IMR-90 (cell line): ENCODE measurements at regions of chr18 and their contacts with region 1.

Region 1: GRCh38 chr18:62131301-62131909 is 55.5 kb downstream of the PIGN start:
- DNase-seq: peak; percentile 76
- ATAC-seq: peak; percentile 92
- H3K4me3 ChIP-seq: no peak overlapping the region
- H3K27ac ChIP-seq: no peak overlapping the region
- H3K4me1 ChIP-seq: peaks cover 2% of the 10 kb centered on the region
- H3K27me3 ChIP-seq: no peaks in the 10 kb centered on the region
- CTCF ChIP-seq: peak; percentile 98
- POLR2A ChIP-seq: peak; percentile 64; the same call in 1 of the 2 replicates
- RAD21 ChIP-seq: peak; percentile 99

Region 2: GRCh38 chr18:61085761-61086160 is 1045.6 kb before region 1 on chr18:
- CTCF ChIA-PET with region 1: no interaction called
- POLR2A ChIA-PET with region 1: no interaction called
- dilution Hi-C with region 1: no loop called
- in situ Hi-C with region 1: no loop called
- intact Hi-C with region 1: loop called (anchors 5 kb)
- DNase-seq: no peak
- ATAC-seq: no peak
- H3K4me3 ChIP-seq: no peak overlapping the region
- H3K27ac ChIP-seq: no peak overlapping the region
- H3K4me1 ChIP-seq: no peaks in the 10 kb centered on the region
- H3K27me3 ChIP-seq: no peaks in the 10 kb centered on the region
- CTCF ChIP-seq: no peak
- POLR2A ChIP-seq: no peak
- RAD21 ChIP-seq: no peak

Region 3: DNA sequence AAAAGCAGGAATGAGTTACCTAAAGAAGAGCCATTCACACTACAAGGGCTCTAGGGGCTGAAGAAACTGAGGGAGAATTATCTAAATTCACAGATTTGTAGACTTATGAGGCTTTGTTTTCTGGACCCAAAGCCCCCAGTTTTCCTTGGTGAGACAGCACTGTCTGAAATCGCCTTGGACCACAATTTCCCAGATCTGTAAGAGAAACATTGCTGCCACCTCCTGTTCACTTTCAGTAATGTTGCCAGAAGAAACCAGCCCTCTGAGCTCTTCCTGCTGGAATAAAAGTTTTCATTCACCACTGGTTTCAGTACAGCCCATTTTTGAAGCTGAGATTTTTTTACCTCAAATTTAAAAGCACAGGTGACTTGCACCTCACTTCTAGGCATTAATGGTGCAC is 628.9 kb before region 1 on chr18:
- CTCF ChIA-PET with region 1: no interaction called
- POLR2A ChIA-PET with region 1: no interaction called
- dilution Hi-C with region 1: no loop called
- in situ Hi-C with region 1: no loop called
- intact Hi-C with region 1: loop called (anchors 1 kb)
- DNase-seq: peak; percentile 61
- ATAC-seq: peak; percentile 88
- H3K4me3 ChIP-seq: no peak overlapping the region
- H3K27ac ChIP-seq: no peak overlapping the region
- H3K4me1 ChIP-seq: no peaks in the 10 kb centered on the region
- H3K27me3 ChIP-seq: peaks cover 7% of the 10 kb centered on the region
- CTCF ChIP-seq: peak; percentile 74
- POLR2A ChIP-seq: no peak
- RAD21 ChIP-seq: peak; percentile 75

Region 4: GRCh38 chr18:61575419-61575818 is 556.0 kb before region 1 on chr18:
- CTCF ChIA-PET with region 1: no interaction called
- POLR2A ChIA-PET with region 1: no interaction called
- dilution Hi-C with region 1: no loop called
- in situ Hi-C with region 1: loop called (anchors 10 kb)
- intact Hi-C with region 1: no loop called
- DNase-seq: no peak
- ATAC-seq: peak; percentile 35; the same call in 1 of the 2 replicates
- H3K4me3 ChIP-seq: no peak overlapping the region
- H3K27ac ChIP-seq: no peak overlapping the region
- H3K4me1 ChIP-seq: peaks cover 6% of the 10 kb centered on the region
- H3K27me3 ChIP-seq: no peaks in the 10 kb centered on the region
- CTCF ChIP-seq: no peak
- POLR2A ChIP-seq: no peak
- RAD21 ChIP-seq: no peak

Region 5: GRCh38 chr18:61635901-61636528 is 495.4 kb before region 1 on chr18:
- CTCF ChIA-PET with region 1: interaction called, 6 read pairs
- POLR2A ChIA-PET with region 1: no interaction called
- dilution Hi-C with region 1: no loop called
- in situ Hi-C with region 1: loop called (anchors 10 kb)
- intact Hi-C with region 1: loop called (anchors 1 kb)
- DNase-seq: peak; percentile 63
- ATAC-seq: peak; percentile 82
- H3K4me3 ChIP-seq: no peak overlapping the region
- H3K27ac ChIP-seq: no peak overlapping the region
- H3K4me1 ChIP-seq: peaks cover 14% of the 10 kb centered on the region; the same call in 1 of the 2 replicates
- H3K27me3 ChIP-seq: no peaks in the 10 kb centered on the region
- CTCF ChIP-seq: peak; percentile 85
- POLR2A ChIP-seq: 0 out of 2 replicates have a peak, but pooled peaks have one; percentile 41
- RAD21 ChIP-seq: peak; percentile 87

Region 6: DNA sequence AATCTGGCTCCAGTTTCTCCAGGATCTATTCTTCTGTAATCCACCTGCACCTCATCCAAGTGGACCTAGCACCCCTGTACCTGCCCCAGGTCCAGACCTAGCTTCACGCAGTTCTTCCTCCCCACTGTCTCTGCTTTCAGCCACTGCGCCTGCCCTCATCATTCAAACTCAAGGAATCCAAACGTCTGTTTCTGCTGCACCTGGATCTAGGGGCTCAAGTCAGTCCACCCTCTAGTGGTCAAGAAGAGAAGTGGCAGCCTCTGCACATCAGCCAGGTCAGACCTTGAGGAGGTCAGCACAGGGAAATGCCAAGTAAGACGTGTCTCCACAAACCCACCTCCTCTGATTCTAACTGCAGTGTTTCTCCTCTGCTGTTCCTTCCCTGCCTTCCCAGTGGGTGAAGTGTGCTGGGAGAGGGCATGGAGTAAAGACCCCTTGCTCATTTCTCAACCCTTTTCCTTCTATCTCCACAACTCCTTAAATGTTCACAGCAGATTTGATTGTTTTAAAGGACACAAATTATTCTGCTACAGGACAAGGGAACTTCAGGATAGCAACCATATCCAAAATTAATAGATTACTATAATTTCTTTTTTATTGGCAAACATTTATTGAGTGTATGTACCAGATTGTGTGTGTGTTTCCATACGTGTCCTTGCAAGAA is 229.9 kb before region 1 on chr18:
- CTCF ChIA-PET with region 1: interaction called, 3 read pairs
- POLR2A ChIA-PET with region 1: no interaction called
- dilution Hi-C with region 1: no loop called
- in situ Hi-C with region 1: loop called (anchors 5 kb)
- intact Hi-C with region 1: loop called (anchors 2 kb)
- DNase-seq: peak; percentile 53
- ATAC-seq: peak; percentile 94
- H3K4me3 ChIP-seq: no peak overlapping the region
- H3K27ac ChIP-seq: no peak overlapping the region
- H3K4me1 ChIP-seq: peaks cover 2% of the 10 kb centered on the region; the same call in 1 of the 2 replicates
- H3K27me3 ChIP-seq: no peaks in the 10 kb centered on the region
- CTCF ChIP-seq: peak; percentile 76
- POLR2A ChIP-seq: no peak
- RAD21 ChIP-seq: peak; percentile 76